ENCODE measurements at regions of chr13 and their contacts with region 1.

Region 1: DNA sequence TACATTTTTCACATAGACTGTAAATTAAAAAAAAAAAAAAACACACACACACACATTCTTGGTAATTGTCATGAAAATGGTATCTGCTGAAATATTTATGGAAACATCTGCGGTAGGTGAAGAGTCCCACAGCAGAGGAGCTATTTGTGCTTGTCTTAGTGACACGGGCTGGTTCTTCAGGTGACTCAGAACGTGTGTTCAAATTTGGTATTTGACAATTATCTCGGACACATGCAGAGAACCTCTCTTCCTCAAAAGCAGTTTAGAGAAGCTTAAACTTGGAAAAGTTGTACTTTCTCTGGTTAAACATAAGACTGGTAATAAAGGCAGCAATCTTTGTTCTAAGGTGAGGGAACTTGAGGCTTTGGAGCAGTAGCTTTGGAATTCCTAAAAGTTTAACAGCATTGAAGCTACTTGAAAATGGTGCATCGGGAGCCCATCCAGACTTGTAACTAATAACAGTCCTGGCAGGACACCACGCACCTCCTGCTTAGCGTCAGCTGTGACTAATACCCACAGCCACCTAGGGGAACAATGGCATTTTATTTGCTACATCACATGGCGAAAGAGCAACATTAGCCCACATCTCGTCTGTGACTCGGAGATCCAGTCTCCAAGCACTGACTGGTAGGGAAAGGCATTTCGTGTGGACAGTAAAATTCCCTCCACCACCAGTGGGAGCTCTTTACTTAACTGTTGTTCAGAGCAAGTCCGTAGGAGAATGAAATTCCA is 1505.1 kb upstream of the SLC10A2 start:
- DNase-seq: peak; percentile 46 to 71
- H3K4me3 ChIP-seq: no peak overlapping the region
- H3K27ac ChIP-seq: no peak overlapping the region
- H3K4me1 ChIP-seq: peaks cover 0 to 5% (median 0%) of the 10 kb centered on the region in 4 experiments; a peak in 1 of 7 replicates
- H3K27me3 ChIP-seq: no peaks in the 10 kb centered on the region
- CTCF ChIP-seq: peak; percentile 42 to 79 (median 70)
- EP300 ChIP-seq: no peak
- POLR2A ChIP-seq: no peak
- RAD21 ChIP-seq: peak; percentile 88 to 93

Region 2: DNA sequence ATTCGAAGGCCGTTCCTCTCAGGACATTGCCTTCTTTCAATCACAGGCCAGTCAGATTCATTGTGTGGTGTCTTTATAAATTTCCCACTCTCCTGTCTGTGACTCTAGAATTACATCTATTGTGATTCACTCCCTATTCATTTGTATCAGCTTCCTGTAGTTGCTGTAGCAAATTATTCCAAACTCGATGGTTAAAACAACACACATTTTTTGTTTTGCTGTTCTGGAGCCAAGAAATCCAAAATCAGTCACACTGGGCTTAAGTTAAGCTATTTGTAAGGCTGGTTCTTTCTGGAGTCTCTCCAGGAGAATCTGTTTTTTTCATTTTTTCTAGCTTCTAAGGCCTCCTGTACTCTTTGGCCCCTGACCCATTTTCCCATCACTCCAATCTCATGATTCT is 18.1 kb before region 1 on chr13:
- CTCF ChIA-PET with region 1: interaction called, 40 read pairs
- POLR2A ChIA-PET with region 1: no interaction called
- DNase-seq: no peak
- H3K4me3 ChIP-seq: no peak overlapping the region
- H3K27ac ChIP-seq: no peak overlapping the region
- H3K4me1 ChIP-seq: no peaks in the 10 kb centered on the region
- H3K27me3 ChIP-seq: no peaks in the 10 kb centered on the region
- CTCF ChIP-seq: no peak
- EP300 ChIP-seq: no peak
- POLR2A ChIP-seq: no peak
- RAD21 ChIP-seq: no peak

Region 3: DNA sequence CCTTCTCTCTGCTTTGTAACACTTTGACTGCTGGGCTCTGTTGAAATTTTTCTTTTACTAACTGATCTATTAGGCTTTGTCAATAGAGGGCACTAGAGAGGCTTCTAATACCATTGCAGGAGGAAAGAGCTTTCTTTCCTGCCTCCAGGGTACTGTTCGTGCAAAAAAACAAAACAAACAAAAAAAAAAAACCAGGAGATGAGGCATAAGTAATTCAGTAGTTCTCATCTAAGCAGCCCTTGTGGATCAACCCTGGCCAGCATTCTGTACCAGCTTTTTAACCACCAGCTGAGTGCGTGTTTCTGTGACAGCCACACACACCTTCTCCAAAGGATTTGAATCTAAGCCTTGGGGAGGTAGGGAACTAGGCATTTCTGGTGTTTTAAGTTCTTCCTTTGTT is 202.4 kb after region 1 on chr13:
- CTCF ChIA-PET with region 1: interaction called, 11 read pairs
- POLR2A ChIA-PET with region 1: no interaction called
- DNase-seq: peak in 1 of 2 experiments; percentile 51
- H3K4me3 ChIP-seq: no peak overlapping the region
- H3K27ac ChIP-seq: no peak overlapping the region
- H3K4me1 ChIP-seq: peaks cover 0 to under 1% (median 0%) of the 10 kb centered on the region in 4 experiments; a peak in 1 of 7 replicates
- H3K27me3 ChIP-seq: no peaks in the 10 kb centered on the region
- CTCF ChIP-seq: peak in 1 of 3 experiments; percentile 57; a peak in 2 of 4 replicates
- EP300 ChIP-seq: no peak
- POLR2A ChIP-seq: no peak
- RAD21 ChIP-seq: peak; percentile 67 to 75